Pancreas (tissue), 10 donors: ENCODE measurements at regions of chr7 and their contacts with region 1.

Region 1: GRCh38 chr7:5450549-5451372 is 27.1 kb upstream of the TNRC18 start:
- DNase-seq: peak; percentile 21 to 84 (median 56)
- ATAC-seq: peak; percentile 51 to 88 (median 81)
- H3K4me3 ChIP-seq: no peak overlapping the region
- H3K27ac ChIP-seq: no peak overlapping the region
- H3K4me1 ChIP-seq: no peaks in the 10 kb centered on the region
- H3K27me3 ChIP-seq: no peaks in the 10 kb centered on the region
- CTCF ChIP-seq: peak; percentile 29 to 56 (median 45)

Region 2: GRCh38 chr7:5237286-5237685 is 213.5 kb before region 1 on chr7:
- intact Hi-C with region 1: loop called in 2 of 3 experiments (anchors 5 kb)
- DNase-seq: peak in 2 of 6 donors; percentile 22 to 58
- ATAC-seq: peak in 2 of 4 donors; percentile 32 to 33
- H3K4me3 ChIP-seq: no peak overlapping the region
- H3K27ac ChIP-seq: peak overlapping the region in 2 of 4 donors; percentile 12 to 33
- H3K4me1 ChIP-seq: no peaks in the 10 kb centered on the region
- H3K27me3 ChIP-seq: no peaks in the 10 kb centered on the region
- CTCF ChIP-seq: no peak

Region 3: DNA sequence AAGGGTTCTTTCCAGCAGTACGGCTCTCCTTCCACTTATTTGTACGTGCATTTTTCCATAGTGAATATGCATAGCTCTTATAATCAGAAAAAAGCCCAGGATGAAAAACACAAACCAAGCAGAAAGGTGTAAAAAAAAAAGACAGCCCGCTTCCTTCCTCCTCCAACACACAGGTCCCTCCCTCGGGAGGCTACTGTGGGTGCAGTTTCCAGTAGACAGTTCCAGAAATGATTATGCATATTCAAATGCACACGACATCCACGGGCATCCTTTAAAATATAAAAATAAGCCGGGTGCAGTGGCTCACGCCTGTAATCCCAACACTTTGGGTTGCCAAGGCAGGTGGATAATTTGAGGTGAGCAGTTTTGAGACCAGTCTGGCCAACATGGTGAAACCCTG is 87.0 kb before region 1 on chr7:
- intact Hi-C with region 1: loop called in 2 of 3 experiments (anchors 5 to 10 kb)
- DNase-seq: no peak
- ATAC-seq: no peak
- H3K4me3 ChIP-seq: no peak overlapping the region
- H3K27ac ChIP-seq: no peak overlapping the region
- H3K4me1 ChIP-seq: no peaks in the 10 kb centered on the region
- H3K27me3 ChIP-seq: no peaks in the 10 kb centered on the region
- CTCF ChIP-seq: no peak

Region 4: DNA sequence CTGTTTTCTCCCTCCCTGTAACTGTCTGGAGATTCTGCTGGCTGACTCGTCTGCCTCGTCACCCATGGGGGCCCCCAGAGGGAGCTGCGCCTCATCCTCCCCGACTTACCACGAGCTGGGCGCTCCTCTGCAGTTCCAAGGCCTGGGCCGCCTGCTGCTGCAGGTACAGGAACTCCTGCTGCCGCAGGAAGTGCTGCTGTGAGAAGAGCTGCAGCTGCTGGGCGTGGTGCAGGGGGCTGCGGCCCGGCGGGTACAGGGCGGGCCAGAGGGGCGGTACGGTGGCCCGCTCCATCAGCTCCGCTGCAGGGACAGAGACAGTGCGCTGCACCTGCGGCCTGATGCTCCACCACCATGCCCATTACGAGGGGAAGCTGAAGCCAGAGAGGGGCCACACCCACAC is 74.8 kb before region 1 on chr7:
- intact Hi-C with region 1: loop called in 1 of 3 experiments (anchors 10 kb)
- DNase-seq: no peak
- ATAC-seq: no peak
- H3K4me3 ChIP-seq: no peak overlapping the region
- H3K27ac ChIP-seq: no peak overlapping the region
- H3K4me1 ChIP-seq: no peaks in the 10 kb centered on the region
- H3K27me3 ChIP-seq: no peaks in the 10 kb centered on the region
- CTCF ChIP-seq: no peak